Activated CD4-positive, alpha-beta memory T cell treated with anti-CD3 and anti-CD28 coated beads, Interleukin-2, amount 10 ng/mL, durations not matched to agents 7 days and 5 days (primary cell): ENCODE measurements at regions of chr10 and their contacts with region 1.

Region 1: DNA sequence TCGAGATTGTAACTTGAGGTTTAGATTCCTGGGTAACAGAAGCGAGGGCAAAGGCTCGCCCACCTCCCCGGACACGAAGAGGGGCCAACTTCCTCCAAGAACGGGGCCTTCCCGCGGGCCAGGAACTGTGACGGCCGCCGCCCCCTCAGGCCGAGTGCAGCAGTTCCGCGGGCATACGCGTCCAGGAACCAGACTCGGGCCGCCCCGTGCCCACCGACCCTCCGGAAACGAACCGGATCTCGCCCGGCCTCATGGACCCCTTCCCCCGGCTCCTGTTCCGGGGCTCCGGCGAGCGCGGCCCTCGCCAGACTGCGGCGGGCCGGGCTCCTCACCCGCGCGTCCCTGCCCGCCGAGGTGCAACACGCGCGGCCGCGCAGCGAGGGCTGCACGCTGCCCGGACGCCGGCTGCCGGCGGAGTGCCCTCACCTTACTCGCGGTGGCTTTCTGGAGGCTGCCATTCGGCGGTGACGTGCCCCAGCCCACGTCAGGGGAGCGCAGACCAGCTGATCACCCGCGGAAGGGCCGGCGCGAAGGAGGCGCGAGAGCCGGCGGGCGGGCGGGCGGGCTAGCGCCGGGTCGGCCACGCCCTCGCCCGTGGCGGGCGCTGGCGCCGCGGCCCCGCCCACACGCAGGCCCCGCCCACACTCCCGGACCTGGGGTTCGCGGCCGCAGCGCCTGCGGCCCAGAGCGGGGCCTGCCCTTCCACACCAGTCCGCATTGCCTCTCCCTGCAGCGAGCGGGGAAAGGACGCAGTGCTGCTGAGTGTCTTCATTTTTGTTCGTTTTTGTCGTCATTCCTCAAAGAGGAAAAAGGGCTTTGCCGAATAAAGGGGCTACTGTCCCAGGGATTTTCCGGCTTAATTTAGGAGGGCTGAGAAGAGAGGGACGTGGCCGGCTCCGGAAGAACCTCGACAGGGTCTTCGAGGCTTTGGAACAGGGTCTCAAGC is at the start of gene XPNPEP1:
- DNase-seq: peak; percentile 87
- H3K4me3 Mint-ChIP-seq: peak within 1 kb of the TSS; percentile 88
- H3K27ac Mint-ChIP-seq: peak within 1 kb of the TSS; percentile 75
- H3K4me1 Mint-ChIP-seq: peaks cover 52% of the 10 kb centered on the region
- H3K27me3 Mint-ChIP-seq: peaks cover 5% of the 10 kb centered on the region
- total RNA-seq, gene XPNPEP1: 78.7 to 90.3 TPM

Region 2: GRCh38 chr10:109902934-109903589 is 20.2 kb before region 1 on chr10:
- CTCF ChIA-PET with region 1: no interaction called
- POLR2A ChIA-PET with region 1: interaction called, 17 read pairs
- DNase-seq: peak; percentile 38
- H3K4me3 Mint-ChIP-seq: peak overlapping the region; percentile 61
- H3K27ac Mint-ChIP-seq: peak overlapping the region; percentile 91
- H3K4me1 Mint-ChIP-seq: peaks cover 54% of the 10 kb centered on the region
- H3K27me3 Mint-ChIP-seq: no peaks in the 10 kb centered on the region